ENCODE measurements at regions of chr16 and their contacts with region 1.

Region 1: GRCh38 chr16:3413730-3414379 is 12.8 kb downstream of the ZNF174 start:
- DNase-seq: no peak
- H3K4me3 ChIP-seq: no peak overlapping the region
- H3K27ac ChIP-seq: no peak overlapping the region
- H3K4me1 ChIP-seq: no peaks in the 10 kb centered on the region
- H3K27me3 ChIP-seq: no peaks in the 10 kb centered on the region
- CTCF ChIP-seq: no peak

Region 2: DNA sequence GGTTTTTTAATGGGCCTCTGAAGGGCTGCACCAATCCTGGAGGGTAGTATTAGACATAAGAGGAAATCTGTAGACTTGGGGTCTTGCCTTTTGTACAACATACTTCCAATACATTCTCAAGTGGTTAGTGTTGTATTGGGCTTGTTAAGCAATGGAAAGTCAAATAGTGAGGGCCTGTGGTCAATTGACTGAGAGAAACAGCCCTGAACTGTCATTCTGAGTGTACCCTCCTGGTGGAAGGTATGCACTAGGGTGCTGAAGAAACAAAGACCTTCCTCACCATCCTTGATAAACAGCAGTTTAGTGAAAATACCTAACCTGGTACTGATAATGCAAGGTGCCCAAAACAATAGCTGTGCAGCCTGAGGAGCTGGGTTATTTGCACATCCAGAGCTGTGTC is 35.9 kb before region 1 on chr16:
- intact Hi-C with region 1: loop called (anchors 5 kb)
- DNase-seq: no peak
- H3K4me3 ChIP-seq: no peak overlapping the region
- H3K27ac ChIP-seq: no peak overlapping the region
- H3K4me1 ChIP-seq: no peaks in the 10 kb centered on the region
- H3K27me3 ChIP-seq: no peaks in the 10 kb centered on the region
- CTCF ChIP-seq: no peak